ENCODE measurements at regions of chr18 and their contacts with region 1.

Region 1: GRCh38 chr18:12659904-12660605 is 2.1 kb upstream of the SPIRE1 start:
- DNase-seq: peak; percentile 63
- H3K27ac ChIP-seq: no peak overlapping the region
- CTCF ChIP-seq: peak; percentile 87

Region 2: GRCh38 chr18:12391618-12392165 is 268.4 kb before region 1 on chr18:
- CTCF ChIA-PET with region 1: interaction called, 21 read pairs
- POLR2A ChIA-PET with region 1: no interaction called
- DNase-seq: peak; percentile 67
- H3K27ac ChIP-seq: no peak overlapping the region
- CTCF ChIP-seq: peak; percentile 96

Region 3: GRCh38 chr18:12862467-12862866 is 202.4 kb after region 1 on chr18:
- CTCF ChIA-PET with region 1: no interaction called
- POLR2A ChIA-PET with region 1: no interaction called
- DNase-seq: peak; percentile 28
- H3K27ac ChIP-seq: peak overlapping the region; percentile 55
- CTCF ChIP-seq: no peak

Measured in RWPE1 (cell line).